GM12878 (cell line): ENCODE measurements at regions of chr2 and their contacts with region 1.

Region 1: DNA sequence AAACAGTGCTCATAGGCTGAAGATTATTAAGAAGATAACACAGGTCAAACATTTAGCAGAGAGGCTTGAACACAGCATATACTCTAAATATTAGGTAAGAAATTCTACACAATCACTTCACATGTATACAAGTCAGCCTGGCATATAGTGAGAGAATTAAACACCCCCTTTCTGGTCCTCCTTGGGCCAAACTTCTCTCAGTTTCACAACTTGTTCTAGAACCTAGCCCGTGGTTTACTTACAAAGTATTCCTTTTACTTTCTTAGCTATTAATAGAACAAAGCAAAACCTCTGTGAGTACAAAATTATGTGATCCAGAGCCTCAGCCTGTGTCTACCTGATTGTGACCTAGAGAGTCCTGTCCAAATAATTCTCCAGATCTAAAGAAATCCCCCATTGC is 562.8 kb downstream of the TNS1 start:
- DNase-seq: no peak
- ATAC-seq: peak; percentile 85
- H3K4me3 ChIP-seq: no peak overlapping the region
- H3K27ac ChIP-seq: peak overlapping the region; percentile 63
- H3K4me1 ChIP-seq: peaks cover 17% of the 10 kb centered on the region
- H3K27me3 ChIP-seq: no peaks in the 10 kb centered on the region
- CTCF ChIP-seq: no peak
- EP300 ChIP-seq: no peak
- POLR2A ChIP-seq: no peak
- RAD21 ChIP-seq: no peak

Region 2: GRCh38 chr2:217016796-217017419 is 423.1 kb before region 1 on chr2:
- CTCF ChIA-PET with region 1: no interaction called
- POLR2A ChIA-PET with region 1: no interaction called
- RAD21 ChIA-PET with region 1: no interaction called
- SMC1A ChIA-PET with region 1: no interaction called
- in situ Hi-C with region 1: no loop called
- intact Hi-C with region 1: no loop called
- DNase-seq: no peak
- ATAC-seq: no peak
- H3K4me3 ChIP-seq: no peak overlapping the region
- H3K27ac ChIP-seq: no peak overlapping the region
- H3K4me1 ChIP-seq: no peaks in the 10 kb centered on the region
- H3K27me3 ChIP-seq: peaks cover 0 to 2% of the 10 kb centered on the region in 2 experiments; a peak in 1 of 4 replicates
- CTCF ChIP-seq: no peak
- EP300 ChIP-seq: no peak
- POLR2A ChIP-seq: no peak
- RAD21 ChIP-seq: no peak

Region 3: DNA sequence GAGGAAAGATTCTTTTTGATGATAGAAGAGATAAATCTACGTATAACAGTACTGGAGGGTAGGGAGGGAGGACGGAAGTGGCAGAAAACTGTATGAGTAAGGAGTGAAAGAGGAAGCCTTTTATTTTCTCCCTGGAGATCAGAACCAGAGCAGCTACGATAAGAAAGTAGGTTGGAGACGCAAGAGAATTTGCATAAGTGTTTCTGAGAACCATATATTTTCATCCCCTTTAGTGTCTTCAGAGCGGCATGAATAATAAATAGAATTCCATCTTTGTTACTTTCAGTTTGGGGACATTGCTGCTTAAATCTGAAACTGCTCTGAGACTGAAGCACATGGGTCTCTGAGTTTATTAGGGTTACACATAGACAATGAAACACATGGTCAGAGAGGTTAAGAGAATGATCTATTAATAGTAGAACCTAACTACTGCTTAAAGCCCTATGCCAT is 350.0 kb before region 1 on chr2:
- CTCF ChIA-PET with region 1: no interaction called
- POLR2A ChIA-PET with region 1: no interaction called
- RAD21 ChIA-PET with region 1: no interaction called
- SMC1A ChIA-PET with region 1: no interaction called
- in situ Hi-C with region 1: no loop called
- intact Hi-C with region 1: loop called (anchors 10 kb)
- DNase-seq: peak; percentile 82
- ATAC-seq: peak; percentile 80
- H3K4me3 ChIP-seq: 0 out of 2 replicates have a peak overlapping the region, but pooled peaks have one; percentile 33
- H3K27ac ChIP-seq: peak overlapping the region; percentile 58; the same call in 1 of the 2 replicates
- H3K4me1 ChIP-seq: peaks cover 28% of the 10 kb centered on the region
- H3K27me3 ChIP-seq: no peaks in the 10 kb centered on the region
- CTCF ChIP-seq: no peak
- EP300 ChIP-seq: peak in 1 of 2 experiments; percentile 89; a peak in 1 of 4 replicates
- POLR2A ChIP-seq: no peak
- RAD21 ChIP-seq: no peak

Region 4: DNA sequence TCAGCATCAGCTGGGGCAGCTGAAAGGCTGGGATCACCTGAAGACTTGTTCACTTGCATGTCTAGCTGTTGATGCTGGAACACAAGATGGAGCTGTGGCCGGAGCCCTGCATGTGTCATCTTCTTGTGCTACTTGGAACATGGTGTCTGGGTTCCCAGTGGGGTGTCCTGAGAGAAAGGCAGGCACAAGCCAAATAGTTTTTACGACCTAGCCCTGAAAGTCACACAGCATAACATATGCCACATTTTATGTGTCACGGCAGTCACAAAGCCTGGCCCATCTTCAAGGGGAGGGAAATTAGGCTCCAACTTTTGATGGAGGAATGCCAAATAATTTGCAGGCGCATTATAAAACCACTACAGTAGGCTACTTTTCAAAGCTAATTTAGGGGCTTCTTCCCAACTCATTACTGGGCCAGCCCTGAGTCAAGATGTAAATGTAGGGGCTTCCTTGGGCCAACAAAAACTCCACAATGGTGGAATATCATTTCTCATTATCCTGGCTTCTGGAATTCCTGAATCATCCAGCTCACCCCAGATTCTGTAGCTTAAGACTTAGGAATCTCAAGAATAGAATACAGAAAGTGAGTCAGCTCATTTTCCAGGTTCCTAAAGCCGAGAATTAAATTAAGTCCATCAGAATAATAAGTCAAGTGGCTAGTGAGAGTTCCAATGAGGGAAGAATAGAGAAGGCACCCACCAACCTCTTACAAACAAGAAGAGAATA is 19.8 kb after region 1 on chr2:
- CTCF ChIA-PET with region 1: no interaction called
- POLR2A ChIA-PET with region 1: no interaction called
- RAD21 ChIA-PET with region 1: no interaction called
- SMC1A ChIA-PET with region 1: no interaction called
- in situ Hi-C with region 1: no loop called
- intact Hi-C with region 1: no loop called
- DNase-seq: no peak
- ATAC-seq: no peak
- H3K4me3 ChIP-seq: no peak overlapping the region
- H3K27ac ChIP-seq: no peak overlapping the region
- H3K4me1 ChIP-seq: peaks cover 5% of the 10 kb centered on the region; the same call in 1 of the 2 replicates
- H3K27me3 ChIP-seq: no peaks in the 10 kb centered on the region; a peak in 1 of 4 replicates
- CTCF ChIP-seq: no peak
- EP300 ChIP-seq: no peak
- POLR2A ChIP-seq: no peak
- RAD21 ChIP-seq: no peak